Common myeloid progenitor, CD34-positive (primary cell): ENCODE measurements at regions of chr9 and their contacts with region 1.

Region 1: DNA sequence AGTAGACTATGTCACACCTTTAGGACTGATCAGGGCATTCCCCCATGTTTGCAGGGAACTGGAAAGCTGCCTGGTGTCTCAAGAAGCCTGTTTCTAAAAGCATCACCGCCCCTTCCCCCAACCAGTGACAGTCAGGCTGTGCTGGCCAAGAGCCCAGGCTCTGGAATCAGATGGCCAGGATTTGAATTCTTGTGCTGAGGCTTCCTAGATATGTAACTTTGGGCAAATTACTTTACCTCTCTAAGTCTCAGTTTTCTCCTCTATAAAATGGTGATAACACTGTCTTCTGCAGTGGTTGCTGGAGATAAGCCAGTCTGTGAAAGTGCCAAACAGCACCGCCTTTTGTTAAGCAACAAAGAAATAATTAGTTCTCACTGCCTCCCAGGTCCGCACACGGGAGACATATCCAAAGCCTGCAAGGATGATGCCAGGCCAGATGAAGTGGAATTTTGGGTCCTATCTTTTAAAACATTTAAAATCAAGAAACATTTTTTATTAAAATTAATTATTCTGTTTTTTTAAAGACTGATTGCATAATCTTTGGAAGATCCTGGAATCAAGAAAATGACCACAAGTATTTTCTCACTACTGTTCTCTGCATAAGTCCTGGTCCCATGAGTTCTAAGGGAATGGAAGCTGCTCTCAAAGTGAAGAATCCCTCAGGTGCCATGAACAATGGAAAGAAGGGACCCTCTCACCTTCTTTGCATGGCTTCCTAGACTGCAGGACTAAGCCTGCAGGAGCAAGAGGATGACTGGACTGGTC is 13.9 kb downstream of the SLC31A2 start:
- DNase-seq: no peak
- H3K4me3 ChIP-seq: no peak overlapping the region
- H3K27ac ChIP-seq: no peak overlapping the region
- H3K4me1 ChIP-seq: no peaks in the 10 kb centered on the region
- H3K27me3 ChIP-seq: no peaks in the 10 kb centered on the region

Region 2: GRCh38 chr9:112971415-112971814 is 193.3 kb before region 1 on chr9:
- CTCF ChIA-PET with region 1: no interaction called
- POLR2A ChIA-PET with region 1: no interaction called
- DNase-seq: peak; percentile 10 to 60 (median 54)
- H3K4me3 ChIP-seq: no peak overlapping the region
- H3K27ac ChIP-seq: no peak overlapping the region
- H3K4me1 ChIP-seq: peaks cover 0 to 4% (median under 1%) of the 10 kb centered on the region in 4 experiments
- H3K27me3 ChIP-seq: peaks cover 0 to 2% (median 0%) of the 10 kb centered on the region in 5 experiments

Region 3: DNA sequence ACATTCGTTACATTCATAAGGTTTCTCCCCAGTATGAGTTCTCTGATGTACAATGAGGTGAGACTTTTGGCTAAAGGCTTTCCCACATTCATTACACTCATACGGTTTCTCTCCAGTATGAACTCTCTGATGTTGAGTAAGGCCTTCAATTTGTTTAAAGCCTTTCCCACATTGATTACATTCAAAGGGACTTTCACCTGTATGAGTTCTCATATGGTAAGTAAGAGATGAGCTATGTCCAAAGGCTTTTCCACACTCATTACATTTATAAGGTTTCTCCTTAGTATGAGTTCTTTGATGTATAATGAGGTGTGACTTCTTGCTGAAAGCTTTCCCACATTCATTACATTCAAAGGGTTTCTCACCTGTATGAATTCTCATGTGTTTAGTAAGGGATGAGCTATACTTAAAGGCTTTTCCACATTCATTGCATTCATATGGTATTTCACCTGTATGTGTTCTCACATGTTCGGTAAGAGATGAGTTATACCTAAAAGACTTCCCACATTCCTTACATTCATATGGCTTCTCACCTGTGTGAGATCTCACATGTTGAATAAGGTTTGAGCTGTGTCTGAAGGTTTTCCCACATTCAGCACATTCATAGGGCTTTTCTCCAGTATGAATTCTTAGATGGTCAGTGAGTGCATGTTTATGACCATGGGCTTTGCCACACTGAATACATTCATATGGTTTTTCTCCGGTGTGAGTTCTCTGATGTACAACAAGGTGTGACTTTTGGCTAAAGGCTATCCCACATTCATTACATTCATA is 121.6 kb before region 1 on chr9:
- CTCF ChIA-PET with region 1: no interaction called
- POLR2A ChIA-PET with region 1: no interaction called
- DNase-seq: no peak
- H3K4me3 ChIP-seq: no peak overlapping the region
- H3K27ac ChIP-seq: no peak overlapping the region
- H3K4me1 ChIP-seq: no peaks in the 10 kb centered on the region
- H3K27me3 ChIP-seq: no peaks in the 10 kb centered on the region

Region 4: DNA sequence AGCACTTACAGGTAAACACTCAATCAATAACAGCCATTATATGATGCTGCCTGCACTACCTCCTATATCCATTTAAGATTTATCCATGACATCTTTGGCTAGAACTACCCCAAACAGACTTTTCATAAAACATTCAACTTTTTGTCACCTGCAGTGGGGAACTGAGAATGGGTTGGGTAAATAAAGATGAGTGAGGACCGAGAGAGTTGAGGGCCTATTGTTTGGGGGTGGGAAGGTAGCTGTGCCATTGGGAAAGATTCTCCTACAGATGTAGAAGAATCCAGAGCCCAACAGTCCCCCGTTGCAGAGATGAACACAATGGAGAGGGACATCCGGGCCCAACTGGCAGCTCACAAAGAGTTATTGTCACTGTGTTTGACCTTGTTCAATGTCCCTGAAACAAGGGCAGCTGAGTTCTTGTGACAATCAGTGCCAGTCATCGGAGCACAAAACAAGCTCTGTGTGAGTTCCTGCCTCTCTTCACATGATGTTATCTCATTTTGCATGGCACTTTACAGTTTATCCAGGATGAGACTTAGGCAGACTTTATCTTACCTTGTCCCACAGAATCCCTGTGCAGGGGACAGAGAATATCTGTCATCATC is 25.4 kb before region 1 on chr9:
- CTCF ChIA-PET with region 1: no interaction called
- POLR2A ChIA-PET with region 1: no interaction called
- DNase-seq: no peak
- H3K4me3 ChIP-seq: no peak overlapping the region
- H3K27ac ChIP-seq: no peak overlapping the region
- H3K4me1 ChIP-seq: no peaks in the 10 kb centered on the region
- H3K27me3 ChIP-seq: peaks cover 0 to 6% (median 3%) of the 10 kb centered on the region in 5 experiments

Region 5: GRCh38 chr9:113150670-113151611 is 13.8 kb before region 1 on chr9 and contains the start of gene SLC31A2:
- CTCF ChIA-PET with region 1: interaction called, 14 read pairs
- POLR2A ChIA-PET with region 1: no interaction called
- DNase-seq: peak; percentile 88 to 94 (median 92)
- H3K4me3 ChIP-seq: peak within 1 kb of the TSS; percentile 58 to 95 (median 82)
- H3K27ac ChIP-seq: peak within 1 kb of the TSS in 1 of 2 experiments; percentile 63
- H3K4me1 ChIP-seq: peaks cover 12 to 46% (median 32%) of the 10 kb centered on the region in 4 experiments
- H3K27me3 ChIP-seq: peaks cover 0 to 4% (median 0%) of the 10 kb centered on the region in 5 experiments

Region 6: DNA sequence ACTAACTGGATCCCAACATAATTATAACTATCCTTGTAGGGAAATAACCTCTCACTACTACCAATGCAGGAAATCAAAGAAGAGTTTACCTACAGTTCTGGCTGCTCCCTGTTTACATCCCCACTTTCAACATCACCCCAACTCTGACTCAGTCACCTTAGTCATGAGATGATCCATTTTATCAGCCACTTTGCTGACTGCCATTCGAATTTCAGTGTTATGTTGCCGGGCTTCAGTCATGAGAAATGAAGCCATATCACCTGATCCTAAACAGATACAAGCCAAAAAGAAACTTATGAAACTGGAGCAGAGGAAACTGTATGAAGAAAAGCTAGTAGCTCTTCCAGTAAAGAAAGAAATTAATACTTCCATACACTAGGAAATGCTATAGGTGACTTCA is 19.8 kb after region 1 on chr9:
- CTCF ChIA-PET with region 1: no interaction called
- POLR2A ChIA-PET with region 1: no interaction called
- DNase-seq: no peak
- H3K4me3 ChIP-seq: no peak overlapping the region
- H3K27ac ChIP-seq: no peak overlapping the region
- H3K4me1 ChIP-seq: peaks cover 0 to 10% (median 0%) of the 10 kb centered on the region in 4 experiments
- H3K27me3 ChIP-seq: no peaks in the 10 kb centered on the region